Esophagus muscularis mucosa (tissue), 4 donors: ENCODE measurements at regions of chr14 and their contacts with region 1.

Region 1: GRCh38 chr14:90815822-90816700 is at the start of gene TTC7B:
- DNase-seq: no peak
- H3K4me3 ChIP-seq: peak within 1 kb of the TSS; percentile 76 to 90 (median 78)
- H3K27ac ChIP-seq: peak within 1 kb of the TSS in 3 of 4 donors; percentile 64 to 70 (median 68)
- H3K4me1 ChIP-seq: peaks cover 18 to 46% (median 27%) of the 10 kb centered on the region in 4 donors
- H3K27me3 ChIP-seq: no peaks in the 10 kb centered on the region
- CTCF ChIP-seq: peak; percentile 12 to 58 (median 41)
- EP300 ChIP-seq: no peak
- POLR2A ChIP-seq: no peak
- total RNA-seq, gene TTC7B: 54.4 to 148 (median 113) TPM

Region 2: DNA sequence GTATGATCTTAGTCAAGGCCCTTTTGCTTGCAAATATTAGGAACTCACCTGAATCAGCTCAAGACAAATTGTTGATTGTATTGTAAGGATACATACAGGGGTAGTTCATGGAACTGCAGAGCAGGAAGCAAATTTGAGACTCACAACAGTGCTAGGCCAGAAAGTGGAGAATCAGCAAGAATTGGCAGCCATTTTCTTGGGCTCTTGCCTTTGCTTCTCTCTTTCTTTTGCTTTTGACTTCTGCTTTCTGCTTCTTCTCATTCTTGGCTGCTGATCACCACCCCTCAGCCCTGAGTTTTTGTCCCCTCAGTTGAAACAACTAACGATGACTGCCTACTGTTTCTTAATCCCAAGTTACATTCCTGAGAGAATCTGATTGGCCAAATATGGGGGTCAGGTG is 719.5 kb before region 1 on chr14:
- intact Hi-C with region 1: no loop called
- DNase-seq: no peak
- H3K4me3 ChIP-seq: no peak overlapping the region
- H3K27ac ChIP-seq: no peak overlapping the region
- H3K4me1 ChIP-seq: peaks cover under 1 to 3% (median 3%) of the 10 kb centered on the region in 4 donors
- H3K27me3 ChIP-seq: peaks cover 0 to 5% (median 0%) of the 10 kb centered on the region in 4 donors
- CTCF ChIP-seq: no peak
- EP300 ChIP-seq: no peak
- POLR2A ChIP-seq: no peak

Region 3: DNA sequence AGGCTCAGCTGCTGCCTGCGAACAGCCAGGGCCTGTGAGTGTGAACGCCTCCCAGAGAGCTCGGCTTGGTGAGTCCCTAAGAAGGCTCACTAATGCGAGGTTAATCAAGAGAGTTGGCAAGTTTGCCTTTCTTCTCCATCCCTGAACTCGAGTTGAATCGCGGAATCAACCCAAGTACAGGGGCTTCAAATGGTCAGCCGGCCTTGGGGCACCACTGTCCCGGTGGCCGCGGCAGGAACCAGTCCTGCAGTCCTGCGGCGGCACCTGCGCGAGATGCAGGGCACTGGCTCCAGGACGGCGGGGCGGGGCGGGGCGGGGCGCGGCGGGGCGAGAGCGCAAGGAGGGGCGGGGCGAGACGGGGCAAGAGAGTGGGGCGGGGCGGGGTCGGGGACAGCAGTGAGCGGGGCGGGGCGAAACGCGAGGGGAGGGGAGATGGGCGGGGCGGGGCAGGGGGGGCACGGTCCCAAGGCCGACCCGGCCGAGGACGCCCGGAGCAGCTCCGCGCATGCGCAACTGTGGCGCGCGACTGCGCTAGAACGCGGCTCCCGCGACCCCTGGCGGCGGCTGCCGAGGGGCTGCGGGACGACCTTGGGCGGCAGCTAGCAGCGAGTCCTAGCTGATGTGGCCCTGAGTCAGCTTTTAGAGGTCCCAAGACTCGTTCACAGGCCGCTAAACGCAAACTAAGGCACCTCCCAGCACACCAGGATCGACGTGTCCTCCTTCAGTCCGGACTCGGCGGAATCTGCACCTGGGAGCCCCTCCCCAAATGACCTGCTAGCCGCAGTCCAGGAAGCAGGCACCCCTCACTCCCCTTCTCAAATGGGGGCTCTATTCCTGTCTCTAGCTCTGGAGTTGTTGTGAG is 57.8 kb before region 1 on chr14:
- intact Hi-C with region 1: loop called (anchors 5 kb)
- DNase-seq: peak; percentile 96
- H3K4me3 ChIP-seq: peak overlapping the region; percentile 50 to 58 (median 54)
- H3K27ac ChIP-seq: peak overlapping the region; percentile 86 to 94 (median 92)
- H3K4me1 ChIP-seq: peaks cover 22 to 32% (median 24%) of the 10 kb centered on the region in 4 donors
- H3K27me3 ChIP-seq: no peaks in the 10 kb centered on the region
- CTCF ChIP-seq: peak; percentile 92 to 95 (median 92)
- EP300 ChIP-seq: no peak
- POLR2A ChIP-seq: no peak

Region 4: GRCh38 chr14:90839024-90839888 is 23.2 kb after region 1 on chr14:
- intact Hi-C with region 1: no loop called
- DNase-seq: peak; percentile 91
- H3K4me3 ChIP-seq: peak overlapping the region in 3 of 4 donors; percentile 1 to 20 (median 9)
- H3K27ac ChIP-seq: peak overlapping the region; percentile 45 to 70 (median 62)
- H3K4me1 ChIP-seq: peaks cover 0 to 12% (median 6%) of the 10 kb centered on the region in 4 donors
- H3K27me3 ChIP-seq: no peaks in the 10 kb centered on the region
- CTCF ChIP-seq: no peak
- EP300 ChIP-seq: no peak
- POLR2A ChIP-seq: no peak